Panc1 (cell line): ENCODE measurements at regions of chr4 and their contacts with region 1.

Region 1: DNA sequence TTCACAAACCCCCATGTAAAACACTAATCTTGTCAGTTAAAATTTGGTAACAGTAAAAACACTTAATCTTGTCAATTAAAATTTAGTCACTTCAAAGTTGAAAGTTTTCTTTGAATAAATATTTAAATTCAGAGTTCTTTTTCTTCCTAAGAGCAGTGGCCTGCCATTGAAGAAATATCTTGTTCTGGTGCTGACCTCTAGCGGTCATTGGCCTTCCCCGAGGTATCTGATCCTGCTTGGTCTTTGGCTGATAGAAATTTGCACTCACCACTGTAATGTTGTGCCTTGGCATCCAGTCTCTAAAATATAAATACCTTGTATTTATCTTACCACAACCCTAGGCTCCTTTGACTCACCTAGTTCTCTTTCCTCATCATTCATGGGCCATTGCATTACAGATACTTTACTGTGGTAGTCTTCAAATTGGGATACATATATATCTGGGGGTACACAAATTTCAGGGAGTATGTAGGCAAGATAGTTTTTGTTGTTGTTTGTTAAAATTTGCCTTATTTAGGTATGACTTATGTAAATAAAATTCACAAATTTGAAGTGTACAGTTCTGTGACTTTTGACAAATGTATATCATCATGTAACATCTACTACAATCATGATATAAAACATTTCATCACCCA is 6.7 kb upstream of the ART3 start:
- DNase-seq: peak; percentile 36
- ATAC-seq: peak; percentile 90
- H3K4me3 ChIP-seq: no peak overlapping the region
- H3K27ac ChIP-seq: no peak overlapping the region
- H3K4me1 ChIP-seq: no peaks in the 10 kb centered on the region
- H3K27me3 ChIP-seq: no peaks in the 10 kb centered on the region
- CTCF ChIP-seq: peak; percentile 80

Region 2: DNA sequence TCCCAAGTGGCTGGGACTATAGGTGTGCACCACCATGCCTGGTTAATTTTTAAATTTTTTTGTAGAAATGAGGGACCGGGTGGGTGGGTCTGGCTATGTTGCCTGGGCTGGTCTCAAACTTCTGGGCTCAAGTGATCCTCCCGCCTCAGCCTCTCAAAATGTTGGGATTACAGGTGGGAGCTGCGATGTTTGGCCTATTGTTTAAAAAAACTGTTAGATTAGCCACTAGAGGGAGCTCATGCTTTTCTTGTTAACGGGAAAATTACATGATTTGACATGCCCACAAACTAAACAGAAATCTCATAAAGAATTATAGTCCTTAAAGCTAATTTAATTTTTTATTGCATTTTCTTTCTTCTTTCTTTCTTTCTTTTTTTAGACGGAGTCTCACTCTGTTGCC is 72.0 kb before region 1 on chr4:
- CTCF ChIA-PET with region 1: interaction called, 3 read pairs
- POLR2A ChIA-PET with region 1: no interaction called
- in situ Hi-C with region 1: no loop called
- intact Hi-C with region 1: loop called (anchors 1 kb)
- DNase-seq: no peak
- ATAC-seq: peak; percentile 39; the same call in 1 of the 2 replicates
- H3K4me3 ChIP-seq: no peak overlapping the region
- H3K27ac ChIP-seq: no peak overlapping the region
- H3K4me1 ChIP-seq: no peaks in the 10 kb centered on the region
- H3K27me3 ChIP-seq: no peaks in the 10 kb centered on the region
- CTCF ChIP-seq: peak; percentile 70

Region 3: GRCh38 chr4:76148142-76148865 is 80.5 kb after region 1 on chr4 and contains the start of gene NUP54:
- CTCF ChIA-PET with region 1: no interaction called
- POLR2A ChIA-PET with region 1: no interaction called
- in situ Hi-C with region 1: no loop called
- intact Hi-C with region 1: no loop called
- DNase-seq: peak; percentile 82
- ATAC-seq: peak; percentile 97
- H3K4me3 ChIP-seq: peak within 1 kb of the TSS; percentile 79 to 86
- H3K27ac ChIP-seq: peak within 1 kb of the TSS; percentile 97
- H3K4me1 ChIP-seq: peaks cover 3% of the 10 kb centered on the region; the same call in 1 of the 2 replicates
- H3K27me3 ChIP-seq: no peaks in the 10 kb centered on the region
- CTCF ChIP-seq: no peak
- total RNA-seq, gene NUP54: 32.1 TPM

Region 4: GRCh38 chr4:76708971-76709771 is 641.4 kb after region 1 on chr4:
- CTCF ChIA-PET with region 1: no interaction called
- POLR2A ChIA-PET with region 1: no interaction called
- in situ Hi-C with region 1: no loop called
- intact Hi-C with region 1: no loop called
- DNase-seq: no peak
- ATAC-seq: no peak
- H3K4me3 ChIP-seq: no peak overlapping the region
- H3K27ac ChIP-seq: no peak overlapping the region
- H3K4me1 ChIP-seq: no peaks in the 10 kb centered on the region
- H3K27me3 ChIP-seq: no peaks in the 10 kb centered on the region
- CTCF ChIP-seq: no peak